ENCODE measurements at regions of chr10 and their contacts with region 1.

Region 1: GRCh38 chr10:73997787-73998622 is at the start of gene VCL:
- DNase-seq: peak; percentile 93 to 100
- H3K4me3 ChIP-seq: peak within 1 kb of the TSS; percentile 90
- H3K27ac ChIP-seq: peak within 1 kb of the TSS; percentile 79
- H3K4me1 ChIP-seq: peaks cover 41% of the 10 kb centered on the region
- H3K27me3 ChIP-seq: no peaks in the 10 kb centered on the region
- CTCF ChIP-seq: no peak
- total RNA-seq, gene VCL: 208 and 225 TPM in 2 replicates

Region 2: DNA sequence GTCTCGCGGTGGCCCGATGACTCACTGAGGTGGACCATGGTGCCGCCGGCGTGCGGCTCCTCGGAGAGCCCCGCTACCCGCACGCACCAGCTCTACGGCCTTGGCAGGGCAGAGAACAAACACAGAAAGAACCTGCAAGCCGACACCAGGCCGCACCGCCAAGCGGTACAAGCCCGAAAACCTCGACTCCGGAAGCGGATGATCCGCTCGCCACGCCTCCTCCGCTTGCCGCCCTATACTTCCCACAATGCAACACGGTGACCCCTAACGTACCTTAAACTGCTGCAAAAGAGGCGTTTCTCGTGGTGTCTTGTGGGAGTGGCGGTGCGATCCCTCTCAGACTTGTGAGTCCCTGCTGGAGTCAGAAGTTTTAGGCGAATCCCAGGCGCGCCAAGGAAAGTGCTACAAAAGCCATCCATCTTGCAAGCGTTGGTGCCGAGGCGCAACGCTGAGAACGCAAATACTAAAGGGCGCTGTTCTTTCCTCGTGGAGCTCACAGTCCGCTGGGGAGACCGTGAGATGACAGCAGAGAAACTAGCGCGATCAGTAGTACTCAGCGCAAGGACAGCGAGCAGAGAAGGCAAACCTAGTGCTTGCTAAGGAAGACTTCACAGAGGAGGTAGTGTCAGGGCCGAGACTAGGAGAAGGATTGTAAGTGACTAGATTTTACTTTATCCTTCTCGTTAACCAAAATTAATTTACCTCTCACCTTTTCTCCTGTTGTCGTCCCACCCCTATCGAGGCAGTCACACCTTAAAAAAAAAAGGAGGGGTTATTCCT is 745.4 kb before region 1 on chr10 and contains the start of gene MRPS16:
- CTCF ChIA-PET with region 1: no interaction called
- POLR2A ChIA-PET with region 1: interaction called, 13 read pairs
- intact Hi-C with region 1: no loop called
- DNase-seq: peak; percentile 93 to 95
- H3K4me3 ChIP-seq: peak within 1 kb of the TSS; percentile 70
- H3K27ac ChIP-seq: peak within 1 kb of the TSS; percentile 80
- H3K4me1 ChIP-seq: peaks cover 37% of the 10 kb centered on the region
- H3K27me3 ChIP-seq: no peaks in the 10 kb centered on the region
- CTCF ChIP-seq: 0 out of 2 replicates have a peak, but pooled peaks have one; percentile 6
- total RNA-seq, gene MRPS16: 148 and 175 TPM in 2 replicates

Region 3: GRCh38 chr10:73956476-73957359 is 41.3 kb before region 1 on chr10:
- CTCF ChIA-PET with region 1: no interaction called
- POLR2A ChIA-PET with region 1: interaction called, 32 read pairs
- intact Hi-C with region 1: loop called (anchors 2 kb)
- DNase-seq: peak; percentile 85 to 95
- H3K4me3 ChIP-seq: peak overlapping the region; percentile 15; the same call in 1 of the 2 replicates
- H3K27ac ChIP-seq: peak overlapping the region; percentile 89
- H3K4me1 ChIP-seq: peaks cover 44% of the 10 kb centered on the region
- H3K27me3 ChIP-seq: no peaks in the 10 kb centered on the region
- CTCF ChIP-seq: no peak

Region 4: GRCh38 chr10:74008212-74008731 is 10.3 kb after region 1 on chr10:
- CTCF ChIA-PET with region 1: interaction called, 4 read pairs
- POLR2A ChIA-PET with region 1: interaction called, 19 read pairs
- intact Hi-C with region 1: no loop called
- DNase-seq: peak in 1 of 2 experiments; percentile 72
- H3K4me3 ChIP-seq: no peak overlapping the region
- H3K27ac ChIP-seq: peak overlapping the region; percentile 25
- H3K4me1 ChIP-seq: peaks cover 62% of the 10 kb centered on the region
- H3K27me3 ChIP-seq: no peaks in the 10 kb centered on the region
- CTCF ChIP-seq: no peak

Region 5: GRCh38 chr10:74071157-74071556 is 73.2 kb after region 1 on chr10:
- CTCF ChIA-PET with region 1: no interaction called
- POLR2A ChIA-PET with region 1: interaction called, 10 read pairs
- intact Hi-C with region 1: no loop called
- DNase-seq: no peak
- H3K4me3 ChIP-seq: no peak overlapping the region
- H3K27ac ChIP-seq: no peak overlapping the region
- H3K4me1 ChIP-seq: no peaks in the 10 kb centered on the region; the same call in 1 of the 2 replicates
- H3K27me3 ChIP-seq: no peaks in the 10 kb centered on the region
- CTCF ChIP-seq: no peak